Activated CD4-positive, alpha-beta memory T cell treated with anti-CD3 and anti-CD28 coated beads for 36 hours (primary cell): ENCODE measurements at regions of chr2 and their contacts with region 1.

Region 1: DNA sequence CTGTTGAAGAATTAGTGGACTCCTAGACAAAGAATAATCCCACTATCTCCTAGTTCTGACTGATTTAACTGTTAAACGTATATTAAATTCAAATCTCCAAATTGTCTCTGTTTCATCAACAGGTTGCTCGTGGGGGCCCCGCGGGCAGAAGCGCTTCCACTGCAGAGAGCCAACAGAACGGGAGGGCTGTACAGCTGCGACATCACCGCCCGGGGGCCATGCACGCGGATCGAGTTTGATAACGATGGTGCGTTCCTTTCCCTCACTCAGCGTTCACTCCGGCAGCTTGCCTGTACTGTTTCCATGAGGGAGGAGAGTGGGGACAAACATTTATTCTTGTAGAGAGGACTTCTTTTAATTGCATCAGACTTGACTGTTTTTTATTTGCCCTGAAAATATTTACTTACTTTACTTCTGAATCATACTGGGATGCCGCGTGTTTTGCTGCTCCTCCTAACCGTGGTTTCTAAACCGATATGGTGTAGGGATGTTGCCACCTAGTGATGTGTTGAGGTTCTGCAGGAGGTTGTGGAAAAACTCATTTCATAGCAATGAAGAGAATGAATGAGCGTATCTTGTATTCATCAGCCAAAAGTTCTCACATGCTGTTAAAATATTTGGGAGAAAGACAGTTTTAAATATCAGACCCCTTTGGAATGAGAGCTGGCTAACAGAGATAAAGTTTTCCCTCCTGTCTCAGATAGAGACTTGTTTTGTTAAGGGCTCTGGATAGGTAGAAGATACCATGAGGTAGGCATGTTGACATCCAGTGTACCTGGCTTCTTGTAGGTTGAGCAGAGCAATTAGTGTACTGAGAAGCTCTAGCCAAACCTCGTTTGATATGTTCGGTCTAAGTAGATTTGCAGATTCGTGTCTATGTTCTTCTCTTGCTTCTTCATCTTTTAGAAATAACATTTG is 38.3 kb downstream of the ITGA6 start:
- DNase-seq: peak; percentile 80
- H3K4me3 Mint-ChIP-seq: no peak overlapping the region
- H3K27ac Mint-ChIP-seq: peak overlapping the region; percentile 18
- H3K4me1 Mint-ChIP-seq: peaks cover 56% of the 10 kb centered on the region
- H3K27me3 Mint-ChIP-seq: no peaks in the 10 kb centered on the region

Region 2: GRCh38 chr2:171703574-171704347 is 761.9 kb before region 1 on chr2:
- CTCF ChIA-PET with region 1: interaction called, 12 read pairs
- POLR2A ChIA-PET with region 1: no interaction called
- intact Hi-C with region 1: loop called (anchors 5 kb)
- DNase-seq: no peak
- H3K4me3 Mint-ChIP-seq: no peak overlapping the region
- H3K27ac Mint-ChIP-seq: no peak overlapping the region
- H3K4me1 Mint-ChIP-seq: peaks cover 7% of the 10 kb centered on the region
- H3K27me3 Mint-ChIP-seq: no peaks in the 10 kb centered on the region

Region 3: GRCh38 chr2:172200495-172201085 is 265.1 kb before region 1 on chr2:
- CTCF ChIA-PET with region 1: interaction called, 31 read pairs
- POLR2A ChIA-PET with region 1: no interaction called
- intact Hi-C with region 1: loop called (anchors 1 kb)
- DNase-seq: no peak
- H3K4me3 Mint-ChIP-seq: no peak overlapping the region
- H3K27ac Mint-ChIP-seq: no peak overlapping the region
- H3K4me1 Mint-ChIP-seq: peaks cover 10% of the 10 kb centered on the region
- H3K27me3 Mint-ChIP-seq: peaks cover 14% of the 10 kb centered on the region

Region 4: GRCh38 chr2:172253190-172254052 is 212.3 kb before region 1 on chr2:
- CTCF ChIA-PET with region 1: interaction called, 20 read pairs
- POLR2A ChIA-PET with region 1: no interaction called
- intact Hi-C with region 1: loop called (anchors 2 kb)
- DNase-seq: peak; percentile 71
- H3K4me3 Mint-ChIP-seq: no peak overlapping the region
- H3K27ac Mint-ChIP-seq: no peak overlapping the region
- H3K4me1 Mint-ChIP-seq: peaks cover 27% of the 10 kb centered on the region
- H3K27me3 Mint-ChIP-seq: peaks cover 3% of the 10 kb centered on the region

Region 5: DNA sequence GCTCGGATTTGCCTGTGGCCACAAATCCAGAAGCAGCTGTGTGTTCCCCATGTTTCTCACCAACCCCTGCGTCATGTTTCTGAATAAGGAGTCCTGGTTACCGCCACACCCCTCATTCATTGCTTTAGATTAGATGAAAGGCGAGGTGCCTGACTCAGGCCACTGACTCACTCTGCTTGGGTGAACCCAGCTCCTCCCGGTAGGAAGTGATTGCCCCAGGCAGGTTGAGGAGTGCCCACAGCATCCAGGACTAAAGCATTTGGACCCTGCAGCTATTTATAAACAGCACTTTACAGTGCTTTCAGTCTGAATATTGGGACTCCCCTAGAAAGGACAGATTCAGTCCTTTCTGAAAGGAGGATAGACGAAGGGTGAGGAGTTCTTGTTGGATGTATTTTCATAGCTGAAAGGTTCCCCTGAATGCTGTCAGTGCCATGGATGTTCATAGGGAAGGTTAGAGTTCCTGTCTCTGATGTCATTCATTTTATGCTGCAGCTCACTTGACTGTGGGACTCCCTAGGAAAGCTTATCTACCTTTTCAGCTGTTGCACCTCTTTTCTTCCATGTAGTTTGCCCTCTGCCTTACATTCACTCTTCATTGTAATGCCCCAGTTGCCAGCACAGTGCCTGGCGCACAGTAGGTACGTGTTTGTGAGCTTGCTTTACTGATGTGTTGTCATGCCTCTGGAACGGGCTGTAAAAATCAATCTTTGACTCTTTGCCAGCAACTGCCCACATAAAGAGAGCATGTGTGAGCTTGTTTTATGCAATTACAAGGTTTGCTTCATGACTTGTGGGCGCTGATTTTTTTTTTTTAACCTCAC is 23.4 kb before region 1 on chr2:
- CTCF ChIA-PET with region 1: interaction called, 138 read pairs
- POLR2A ChIA-PET with region 1: interaction called, 6 read pairs
- intact Hi-C with region 1: loop called (anchors 1 kb)
- DNase-seq: peak; percentile 81
- H3K4me3 Mint-ChIP-seq: peak overlapping the region; percentile 40
- H3K27ac Mint-ChIP-seq: peak overlapping the region; percentile 66
- H3K4me1 Mint-ChIP-seq: peaks cover 63% of the 10 kb centered on the region
- H3K27me3 Mint-ChIP-seq: no peaks in the 10 kb centered on the region

Region 6: DNA sequence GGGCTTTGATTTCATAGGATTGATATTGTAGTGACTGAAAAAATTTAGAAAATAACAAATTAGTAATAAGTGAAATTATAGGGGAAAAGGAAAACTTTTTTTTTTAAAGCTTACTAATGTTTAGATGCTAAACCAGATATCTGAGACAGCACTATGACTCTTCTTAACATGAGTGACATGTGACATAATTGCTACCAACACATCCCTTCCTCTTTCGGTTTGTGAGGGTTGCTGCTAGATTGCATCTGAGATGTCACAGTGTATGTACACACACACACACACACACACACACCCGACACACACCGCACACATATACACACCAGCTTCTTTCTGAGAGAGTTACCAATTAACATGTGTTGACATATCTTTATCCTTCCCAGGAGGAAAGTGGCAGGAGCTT is 287.9 kb after region 1 on chr2:
- CTCF ChIA-PET with region 1: no interaction called
- POLR2A ChIA-PET with region 1: no interaction called
- intact Hi-C with region 1: no loop called
- DNase-seq: no peak
- H3K4me3 Mint-ChIP-seq: no peak overlapping the region
- H3K27ac Mint-ChIP-seq: no peak overlapping the region
- H3K4me1 Mint-ChIP-seq: no peaks in the 10 kb centered on the region
- H3K27me3 Mint-ChIP-seq: peaks cover 12% of the 10 kb centered on the region